ENCODE measurements at regions of chr12 and their contacts with region 1.

Region 1: DNA sequence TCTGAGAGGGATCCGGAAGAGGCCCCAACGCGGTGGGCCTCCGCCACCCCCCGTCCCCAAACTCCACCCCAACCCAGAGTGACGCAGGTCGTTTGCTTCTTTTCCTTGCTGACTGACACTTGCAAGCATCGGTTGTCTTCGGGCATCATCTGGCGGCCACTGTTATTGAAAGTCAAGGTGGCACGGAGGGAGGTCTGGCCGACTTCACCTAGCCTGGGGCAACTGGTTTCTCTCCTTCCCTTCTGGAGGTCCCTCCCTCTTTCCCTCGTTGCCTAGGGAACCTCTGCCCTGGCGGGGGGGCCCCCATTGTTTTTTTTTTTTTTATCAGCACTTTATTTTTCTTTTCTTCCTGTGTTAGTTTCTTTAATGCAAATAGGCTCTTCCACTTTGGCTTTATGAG is 241.8 kb downstream of the ALG10 start:
- DNase-seq: no peak
- H3K4me3 ChIP-seq: no peak overlapping the region
- H3K27ac ChIP-seq: no peak overlapping the region
- H3K4me1 ChIP-seq: no peaks in the 10 kb centered on the region
- H3K27me3 ChIP-seq: no peaks in the 10 kb centered on the region
- CTCF ChIP-seq: no peak

Region 2: DNA sequence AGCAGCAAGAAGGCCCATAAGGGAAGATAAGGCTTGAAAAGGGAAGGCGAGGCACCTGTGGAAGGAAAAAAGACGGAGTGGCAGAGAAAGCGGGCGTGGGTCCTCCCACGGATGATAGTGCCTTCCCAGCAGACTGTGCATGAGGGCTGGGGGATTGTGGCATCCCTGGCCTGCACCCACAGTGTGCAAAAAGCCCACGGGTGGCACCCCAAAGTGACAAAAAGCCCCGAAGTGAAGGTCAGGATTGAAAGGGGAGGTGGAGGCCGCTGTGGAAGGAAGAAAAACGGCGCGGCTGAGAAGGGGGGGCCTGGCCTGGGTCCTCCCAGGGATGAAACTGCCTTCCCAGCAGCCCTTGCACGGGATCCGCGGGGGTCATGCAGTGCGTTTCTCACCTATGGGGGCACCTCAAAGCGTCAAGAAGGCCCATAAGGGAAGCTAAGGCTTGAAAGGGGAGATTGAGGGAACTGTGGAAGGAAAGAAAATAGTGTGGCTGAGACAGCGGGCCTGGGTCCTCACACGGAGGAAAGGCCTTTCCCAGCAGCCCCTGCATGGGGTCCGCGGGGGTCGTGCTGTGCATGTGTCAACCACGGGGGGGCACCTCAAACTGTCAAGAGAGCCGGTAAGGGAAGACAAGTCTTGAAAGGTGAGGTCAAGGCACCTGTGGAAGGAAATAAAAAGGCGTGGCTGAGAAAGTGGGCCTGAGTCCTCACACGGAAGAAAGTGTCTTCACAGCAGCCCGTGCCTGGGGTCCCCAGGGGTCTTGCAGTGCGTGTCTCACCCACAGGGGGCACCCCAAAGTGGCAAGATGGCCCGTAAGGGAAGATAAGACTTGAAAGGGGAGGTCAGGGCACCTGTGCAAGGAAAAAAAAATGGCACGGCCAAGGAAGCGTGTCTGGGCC is 32.3 kb after region 1 on chr12:
- CTCF ChIA-PET with region 1: no interaction called
- dilution Hi-C with region 1: no loop called
- in situ Hi-C with region 1: no loop called
- intact Hi-C with region 1: no loop called
- DNase-seq: no peak
- H3K4me3 ChIP-seq: no peak overlapping the region
- H3K27ac ChIP-seq: no peak overlapping the region
- H3K4me1 ChIP-seq: no peaks in the 10 kb centered on the region
- H3K27me3 ChIP-seq: no peaks in the 10 kb centered on the region
- CTCF ChIP-seq: no peak

Region 3: GRCh38 chr12:34335819-34336262 is 71.7 kb after region 1 on chr12:
- CTCF ChIA-PET with region 1: no interaction called
- dilution Hi-C with region 1: loop called (anchors 5 kb)
- in situ Hi-C with region 1: no loop called
- intact Hi-C with region 1: no loop called
- DNase-seq: no peak
- H3K4me3 ChIP-seq: no peak overlapping the region
- H3K27ac ChIP-seq: no peak overlapping the region
- H3K4me1 ChIP-seq: no peaks in the 10 kb centered on the region
- H3K27me3 ChIP-seq: no peaks in the 10 kb centered on the region
- CTCF ChIP-seq: no peak